ENCODE measurements at regions of chrX and their contacts with region 1.

Region 1: GRCh38 chrX:137143864-137144263 is 110.1 kb upstream of the GPR101 start:
- DNase-seq: no peak

Region 2: GRCh38 chrX:136850441-136851175 is 293.3 kb before region 1 on chrX:
- CTCF ChIA-PET with region 1: interaction called, 11 read pairs
- POLR2A ChIA-PET with region 1: no interaction called
- DNase-seq: no peak

Region 3: DNA sequence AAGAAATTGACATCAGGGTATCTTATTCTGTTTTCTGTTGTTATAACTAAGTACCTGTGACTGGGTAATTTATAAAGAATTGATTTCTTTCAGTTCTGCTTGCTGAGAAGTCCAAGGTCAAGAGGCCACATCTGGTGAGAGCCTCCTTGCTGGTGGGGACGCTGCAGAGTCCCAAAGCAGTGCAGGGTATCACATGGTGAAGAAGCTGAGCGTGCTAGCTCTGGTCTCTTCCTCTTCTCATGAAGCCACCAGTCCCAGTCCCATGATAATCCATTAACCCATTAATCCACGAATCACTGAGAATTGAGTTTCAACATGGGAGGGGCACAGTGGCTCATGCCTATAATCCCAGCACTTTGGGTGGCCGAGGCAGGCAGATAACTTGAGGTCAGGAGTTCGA is 281.3 kb before region 1 on chrX:
- CTCF ChIA-PET with region 1: no interaction called
- POLR2A ChIA-PET with region 1: no interaction called
- DNase-seq: no peak

Region 4: DNA sequence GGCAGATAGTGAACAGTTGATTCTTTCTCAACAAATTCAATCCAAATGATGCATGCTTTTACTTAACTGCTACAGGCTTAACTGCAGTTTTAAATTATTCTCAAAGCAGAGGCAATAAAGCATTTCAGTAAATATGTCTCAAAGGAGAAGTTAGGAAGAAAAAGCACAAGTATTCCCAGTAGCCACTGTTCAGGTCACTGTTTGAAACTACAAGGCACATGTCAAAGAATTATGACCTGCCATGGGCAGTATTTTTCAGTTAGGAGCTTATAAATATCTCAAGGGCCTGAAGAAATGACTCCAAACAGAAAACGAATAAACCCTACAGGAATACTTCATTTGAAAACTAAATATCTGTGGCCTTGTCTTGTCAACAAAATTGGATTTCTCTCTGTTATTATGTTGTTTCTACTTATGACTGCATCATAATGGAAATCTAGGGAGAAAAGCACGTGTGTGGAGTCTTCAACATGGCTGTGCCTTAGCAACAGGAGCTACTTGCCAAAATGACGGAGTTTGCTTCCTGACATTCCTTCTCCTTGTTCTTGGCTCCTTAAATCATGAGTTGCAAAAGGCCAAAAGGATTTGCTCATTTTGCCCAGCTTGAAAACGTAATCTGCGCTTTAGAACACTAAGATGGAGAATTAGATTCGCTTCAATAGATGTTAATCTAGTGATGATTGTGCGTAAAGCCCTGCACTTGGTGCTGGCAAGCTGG is 42.4 kb before region 1 on chrX:
- CTCF ChIA-PET with region 1: no interaction called
- POLR2A ChIA-PET with region 1: no interaction called
- DNase-seq: no peak